ENCODE measurements at regions of chr10 and their contacts with region 1.

Region 1: DNA sequence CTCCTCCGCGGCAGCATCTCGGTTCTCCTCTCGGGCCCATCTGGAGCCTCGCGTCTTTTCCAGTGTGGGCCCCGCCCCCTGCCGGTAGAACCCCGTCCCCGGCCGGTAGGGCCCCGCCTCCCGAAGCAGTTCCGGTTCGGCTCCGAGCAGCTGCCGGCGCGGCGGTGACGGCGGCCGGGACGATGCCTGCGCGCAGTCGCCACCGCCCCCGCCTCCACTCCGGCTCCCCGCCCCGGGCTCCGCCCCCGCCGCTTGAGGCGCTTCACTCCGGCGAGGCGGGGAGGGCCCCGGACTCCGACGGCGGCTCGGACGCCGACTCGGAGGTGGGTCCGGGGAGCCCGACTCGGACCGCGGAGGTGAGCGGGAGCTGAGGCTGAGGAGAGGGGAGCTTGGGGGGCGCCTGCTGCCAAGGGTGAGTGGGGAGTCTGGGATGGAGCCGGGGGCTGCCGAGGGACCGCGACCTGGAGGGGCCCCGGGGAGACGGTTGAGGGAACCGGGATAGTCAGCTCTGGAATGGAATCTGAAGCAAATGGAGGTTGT is at the start of gene SAMD8:
- DNase-seq: peak; percentile 98
- ATAC-seq: peak; percentile 94
- total RNA-seq, gene SAMD8: 23.3 TPM

Region 2: DNA sequence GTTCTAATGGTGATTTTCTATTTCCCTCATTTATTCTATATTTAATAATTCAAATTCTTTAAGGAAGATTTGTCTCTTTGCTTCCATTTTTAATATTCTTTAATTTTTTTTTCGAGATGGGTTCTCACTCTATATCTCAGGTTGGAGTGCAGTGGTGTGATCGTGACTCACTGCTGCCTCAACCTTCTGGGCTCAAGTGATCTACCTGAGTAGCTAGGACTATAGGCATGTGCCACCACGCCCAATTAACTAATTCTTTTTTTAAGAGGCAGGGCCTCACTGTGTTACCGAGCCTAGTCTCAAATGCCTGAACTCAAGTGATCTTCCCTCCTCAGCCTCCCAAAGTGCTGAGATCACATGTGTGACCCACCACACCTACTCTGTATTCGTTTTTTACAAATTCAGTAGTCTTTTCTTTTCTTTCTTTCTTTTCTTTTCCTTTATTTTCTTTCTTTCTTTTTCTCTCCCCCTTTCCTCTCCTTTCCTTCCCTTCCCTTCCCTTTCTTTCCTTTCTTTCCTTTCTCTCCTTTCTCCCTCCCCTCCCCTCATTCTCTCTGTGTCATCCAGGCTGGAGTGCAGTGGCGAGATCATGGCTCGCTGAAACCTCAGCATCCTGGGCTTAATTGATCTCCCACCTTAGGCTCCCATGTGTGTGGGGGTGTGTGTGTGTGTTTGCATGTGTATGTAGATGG is 637.3 kb before region 1 on chr10:
- intact Hi-C with region 1: no loop called
- DNase-seq: no peak
- ATAC-seq: no peak

Region 3: GRCh38 chr10:74826142-74827044 is 285.0 kb before region 1 on chr10 and contains the start of gene KAT6B:
- intact Hi-C with region 1: loop called (anchors 10 kb)
- DNase-seq: peak; percentile 100
- ATAC-seq: peak; percentile 89
- total RNA-seq, gene KAT6B: 36.2 TPM

Region 4: GRCh38 chr10:75019370-75019769 is 92.1 kb before region 1 on chr10:
- intact Hi-C with region 1: no loop called
- DNase-seq: no peak
- ATAC-seq: no peak